Breast epithelium (tissue), 4 donors: ENCODE measurements at regions of chr12 and their contacts with region 1.

Region 1: GRCh38 chr12:113048716-113049127 is 7.8 kb upstream of the DTX1 start:
- DNase-seq: no peak
- H3K4me3 ChIP-seq: no peak overlapping the region
- H3K27ac ChIP-seq: no peak overlapping the region
- H3K4me1 ChIP-seq: no peaks in the 10 kb centered on the region
- H3K27me3 ChIP-seq: no peaks in the 10 kb centered on the region
- CTCF ChIP-seq: peak; percentile 47 to 77 (median 75)
- POLR2A ChIP-seq: no peak

Region 2: GRCh38 chr12:113214938-113215400 is 166.2 kb after region 1 on chr12:
- intact Hi-C with region 1: no loop called
- DNase-seq: peak in 1 of 2 donors; percentile 75
- H3K4me3 ChIP-seq: no peak overlapping the region
- H3K27ac ChIP-seq: peak overlapping the region; percentile 7 to 73
- H3K4me1 ChIP-seq: no peaks in the 10 kb centered on the region
- H3K27me3 ChIP-seq: no peaks in the 10 kb centered on the region
- CTCF ChIP-seq: peak in 2 of 3 donors; percentile 51 to 53
- POLR2A ChIP-seq: no peak

Region 3: DNA sequence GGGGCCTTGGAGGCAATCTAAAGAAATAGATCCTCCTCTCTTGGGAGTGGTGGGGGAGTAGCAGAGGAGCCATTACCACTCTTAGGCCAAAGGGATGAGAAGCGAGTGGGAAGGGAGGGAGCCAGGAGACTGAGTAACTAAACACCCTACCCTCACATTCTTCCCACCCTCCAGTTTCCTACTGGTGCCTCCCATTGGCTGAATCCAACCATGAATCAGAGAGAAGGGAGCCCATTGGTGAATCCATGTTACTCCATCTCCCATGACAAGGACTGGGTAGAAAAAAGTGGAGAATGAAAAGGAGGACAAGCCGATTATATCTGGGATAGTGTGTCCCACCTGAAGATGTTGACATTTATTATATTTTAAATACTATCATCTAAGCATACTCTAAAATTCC is 499.7 kb after region 1 on chr12:
- intact Hi-C with region 1: loop called (anchors 10 kb)
- DNase-seq: no peak
- H3K4me3 ChIP-seq: no peak overlapping the region
- H3K27ac ChIP-seq: no peak overlapping the region
- H3K4me1 ChIP-seq: no peaks in the 10 kb centered on the region
- H3K27me3 ChIP-seq: peaks cover 0 to 40% of the 10 kb centered on the region in 2 donors
- CTCF ChIP-seq: no peak
- POLR2A ChIP-seq: no peak